ENCODE measurements at regions of chr5 and their contacts with region 1.

Region 1: GRCh38 chr5:154857530-154858296 is 714 bp upstream of the CNOT8 start:
- DNase-seq: peak; percentile 90
- ATAC-seq: peak; percentile 59
- H3K4me3 Mint-ChIP-seq: peak overlapping the region; percentile 99
- H3K27ac Mint-ChIP-seq: peak overlapping the region; percentile 98
- H3K4me1 Mint-ChIP-seq: peaks cover 34% of the 10 kb centered on the region
- H3K27me3 Mint-ChIP-seq: no peaks in the 10 kb centered on the region

Region 2: GRCh38 chr5:154038707-154039457 is 818.8 kb before region 1 on chr5 and contains the starts of genes FAM114A2 and MFAP3:
- CTCF ChIA-PET with region 1: no interaction called
- POLR2A ChIA-PET with region 1: no interaction called
- intact Hi-C with region 1: loop called in 1 of 2 experiments (anchors 2 kb)
- DNase-seq: peak; percentile 94
- ATAC-seq: peak; percentile 99
- H3K4me3 Mint-ChIP-seq: peak within 1 kb of the TSS; percentile 100
- H3K27ac Mint-ChIP-seq: peak within 1 kb of the TSS; percentile 92
- H3K4me1 Mint-ChIP-seq: peaks cover 55% of the 10 kb centered on the region
- H3K27me3 Mint-ChIP-seq: no peaks in the 10 kb centered on the region
- total RNA-seq, gene FAM114A2: 27.9 to 28.5 TPM
- total RNA-seq, gene MFAP3: 13.2 to 13.5 TPM

Region 3: DNA sequence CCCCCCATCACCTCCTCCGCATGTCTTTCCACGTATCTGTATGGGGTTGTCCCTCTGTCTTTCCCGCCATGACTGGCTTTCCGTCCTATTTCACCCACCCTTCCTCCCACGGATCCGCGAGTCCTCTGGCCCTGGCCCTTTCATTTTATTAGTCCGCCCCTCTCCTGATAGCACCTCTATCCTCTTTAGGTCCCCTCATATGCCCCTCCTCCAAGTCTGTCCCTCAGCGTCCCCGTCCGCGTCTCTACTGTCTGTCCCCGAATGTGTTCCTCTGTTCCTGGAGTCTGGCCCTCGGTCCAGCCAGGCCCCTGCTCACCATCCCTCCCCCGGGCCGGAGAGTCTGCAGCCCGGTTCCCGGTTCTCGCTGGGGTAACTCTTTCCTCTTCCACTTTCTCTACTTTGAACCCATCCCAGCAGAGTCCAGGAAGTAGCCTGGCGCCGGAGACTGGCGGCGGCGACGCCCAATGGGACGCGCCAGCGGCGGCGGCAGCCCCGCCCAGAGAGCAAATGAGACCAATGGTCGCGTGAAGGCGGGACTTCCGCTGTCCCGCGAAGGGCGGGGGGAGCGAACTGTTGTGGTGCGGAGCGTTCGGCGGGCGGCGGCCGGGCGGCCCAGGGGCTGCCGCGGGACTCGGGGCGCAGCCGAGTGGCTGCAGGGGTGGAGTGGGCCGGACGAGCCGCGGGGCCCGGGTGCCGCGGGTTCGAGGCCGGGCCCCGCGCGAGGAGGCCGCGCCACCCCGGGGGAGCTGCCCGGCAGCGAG is 412.1 kb before region 1 on chr5 and contains the start of gene SAP30L:
- CTCF ChIA-PET with region 1: no interaction called
- POLR2A ChIA-PET with region 1: no interaction called
- intact Hi-C with region 1: loop called (anchors 1 to 5 kb)
- DNase-seq: peak; percentile 96
- ATAC-seq: peak; percentile 97
- H3K4me3 Mint-ChIP-seq: peak within 1 kb of the TSS; percentile 98
- H3K27ac Mint-ChIP-seq: peak within 1 kb of the TSS; percentile 96
- H3K4me1 Mint-ChIP-seq: peaks cover 40% of the 10 kb centered on the region
- H3K27me3 Mint-ChIP-seq: no peaks in the 10 kb centered on the region
- total RNA-seq, gene SAP30L: 22.1 to 24.5 TPM

Region 4: DNA sequence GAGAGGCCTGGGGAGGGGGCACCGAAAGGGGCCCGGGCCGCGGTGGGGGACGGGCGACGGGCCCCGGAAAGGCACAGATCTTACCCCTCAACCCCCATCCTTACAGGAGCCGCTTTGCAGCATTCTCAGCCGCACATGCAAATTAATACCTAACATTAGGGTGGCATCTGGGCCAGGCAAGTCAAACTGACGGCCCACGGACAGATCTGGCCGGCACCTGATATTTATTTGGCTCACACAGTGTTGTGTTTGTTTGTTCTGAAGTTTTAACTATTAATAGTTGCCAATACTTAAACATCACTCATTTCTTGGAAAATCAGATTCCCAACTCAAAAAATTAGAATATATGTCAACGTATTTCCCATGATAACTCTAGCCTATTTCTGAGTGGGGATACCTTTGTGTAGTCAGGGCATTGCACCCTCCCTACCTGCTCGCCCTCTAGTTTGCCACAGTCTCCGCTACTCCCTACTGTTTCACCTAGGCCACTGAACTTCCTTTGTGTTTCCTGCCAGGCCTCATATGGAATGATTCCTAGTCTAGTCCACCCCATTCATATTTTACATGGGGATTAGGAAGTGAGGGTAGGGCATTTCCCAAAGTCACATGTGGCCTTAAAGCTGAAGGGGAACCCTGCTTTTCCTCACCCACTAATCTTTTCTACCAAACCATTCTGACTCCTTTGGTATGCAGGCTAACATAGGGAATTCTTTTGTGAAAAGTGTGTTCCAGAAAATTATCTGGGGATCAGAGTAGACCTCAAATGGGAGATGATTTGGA is 174.4 kb before region 1 on chr5:
- CTCF ChIA-PET with region 1: interaction called, 3 read pairs
- POLR2A ChIA-PET with region 1: no interaction called
- intact Hi-C with region 1: loop called in 1 of 2 experiments (anchors 1 kb)
- DNase-seq: no peak
- ATAC-seq: peak; percentile 38
- H3K4me3 Mint-ChIP-seq: peak overlapping the region; percentile 56
- H3K27ac Mint-ChIP-seq: no peak overlapping the region
- H3K4me1 Mint-ChIP-seq: peaks cover 5% of the 10 kb centered on the region
- H3K27me3 Mint-ChIP-seq: peaks cover 11% of the 10 kb centered on the region

Region 5: GRCh38 chr5:154712518-154713381 is 145.0 kb before region 1 on chr5:
- CTCF ChIA-PET with region 1: no interaction called
- POLR2A ChIA-PET with region 1: no interaction called
- intact Hi-C with region 1: no loop called
- DNase-seq: no peak
- ATAC-seq: no peak
- H3K4me3 Mint-ChIP-seq: no peak overlapping the region
- H3K27ac Mint-ChIP-seq: no peak overlapping the region
- H3K4me1 Mint-ChIP-seq: peaks cover 5% of the 10 kb centered on the region
- H3K27me3 Mint-ChIP-seq: no peaks in the 10 kb centered on the region

Region 6: DNA sequence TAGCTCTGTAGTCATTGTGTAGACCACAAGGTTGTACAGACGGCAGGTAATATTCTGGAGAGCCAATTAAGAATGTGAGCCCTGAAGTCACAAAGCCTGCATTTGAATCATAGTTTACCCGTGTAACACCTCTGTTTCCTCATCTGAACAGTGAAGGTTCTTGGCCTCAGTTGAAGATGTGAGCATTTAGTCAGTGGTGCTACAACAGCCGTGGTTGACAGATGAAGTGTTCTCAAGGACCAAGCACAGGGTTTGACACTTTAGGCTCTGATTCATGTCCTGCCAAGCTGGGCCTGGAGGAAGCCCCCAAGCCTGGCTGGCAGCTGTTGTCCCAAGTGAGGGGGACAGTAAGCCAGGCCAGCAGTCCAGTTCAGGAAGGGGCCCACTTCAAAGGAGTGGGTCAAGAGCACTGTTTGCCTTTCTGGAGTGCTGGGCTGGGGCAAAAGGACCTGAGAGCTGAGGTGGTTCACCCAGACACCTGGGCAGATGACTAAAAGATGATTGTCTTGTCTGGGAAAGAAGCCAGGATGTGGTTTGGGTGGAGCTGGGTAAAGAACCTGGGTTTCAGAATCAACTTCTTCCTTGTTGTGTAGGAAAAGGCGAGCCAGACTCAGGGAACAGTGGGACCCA is 28.0 kb before region 1 on chr5:
- CTCF ChIA-PET with region 1: no interaction called
- POLR2A ChIA-PET with region 1: interaction called, 7 read pairs
- intact Hi-C with region 1: loop called (anchors 1 kb)
- DNase-seq: peak; percentile 59
- ATAC-seq: peak; percentile 91
- H3K4me3 Mint-ChIP-seq: no peak overlapping the region
- H3K27ac Mint-ChIP-seq: peak overlapping the region; percentile 75
- H3K4me1 Mint-ChIP-seq: peaks cover 39% of the 10 kb centered on the region
- H3K27me3 Mint-ChIP-seq: no peaks in the 10 kb centered on the region

Region 7: GRCh38 chr5:154940772-154941620 is 83.3 kb after region 1 on chr5 and contains the start of gene MRPL22:
- CTCF ChIA-PET with region 1: interaction called, 4 read pairs
- POLR2A ChIA-PET with region 1: interaction called, 5 read pairs
- intact Hi-C with region 1: loop called (anchors 1 to 2 kb)
- DNase-seq: peak; percentile 97
- ATAC-seq: peak; percentile 72
- H3K4me3 Mint-ChIP-seq: peak within 1 kb of the TSS; percentile 97
- H3K27ac Mint-ChIP-seq: peak within 1 kb of the TSS; percentile 96
- H3K4me1 Mint-ChIP-seq: peaks cover 40% of the 10 kb centered on the region
- H3K27me3 Mint-ChIP-seq: no peaks in the 10 kb centered on the region
- total RNA-seq, gene MRPL22: 77.2 to 86.7 TPM

Measured in activated CD4-positive, alpha-beta T cell treated with anti-CD3 and anti-CD28 coated beads for 36 hours (primary cell).